ENCODE measurements at regions of chr5 and their contacts with region 1.

Region 1: GRCh38 chr5:142387033-142387682 is 62.3 kb upstream of the SPRY4 start:
- DNase-seq: no peak
- H3K4me3 ChIP-seq: no peak overlapping the region
- H3K4me3 Mint-ChIP-seq: no peak overlapping the region
- H3K27ac ChIP-seq: no peak overlapping the region
- H3K27ac Mint-ChIP-seq: peak overlapping the region in 1 of 8 donors; percentile 2
- H3K4me1 ChIP-seq: peaks cover 8% of the 10 kb centered on the region
- H3K4me1 Mint-ChIP-seq: peaks cover 3 to 5% (median 3%) of the 10 kb centered on the region in 3 donors
- H3K27me3 ChIP-seq: no peaks in the 10 kb centered on the region
- H3K27me3 Mint-ChIP-seq: peaks cover 4 to 15% of the 10 kb centered on the region in 2 donors

Region 2: GRCh38 chr5:142053426-142054151 is 333.6 kb before region 1 on chr5:
- CTCF ChIA-PET with region 1: no interaction called
- POLR2A ChIA-PET with region 1: interaction called, 11 read pairs
- DNase-seq: no peak
- H3K4me3 ChIP-seq: no peak overlapping the region
- H3K4me3 Mint-ChIP-seq: no peak overlapping the region
- H3K27ac ChIP-seq: no peak overlapping the region
- H3K27ac Mint-ChIP-seq: peak overlapping the region in 1 of 8 donors; percentile 3
- H3K4me1 ChIP-seq: no peaks in the 10 kb centered on the region
- H3K4me1 Mint-ChIP-seq: peaks cover 0 to 5% (median 3%) of the 10 kb centered on the region in 3 donors
- H3K27me3 ChIP-seq: no peaks in the 10 kb centered on the region
- H3K27me3 Mint-ChIP-seq: peaks cover 0 to 3% of the 10 kb centered on the region in 2 donors

Region 3: GRCh38 chr5:142366007-142366406 is 21.2 kb before region 1 on chr5:
- CTCF ChIA-PET with region 1: no interaction called
- POLR2A ChIA-PET with region 1: no interaction called
- DNase-seq: no peak
- H3K4me3 ChIP-seq: no peak overlapping the region
- H3K4me3 Mint-ChIP-seq: no peak overlapping the region
- H3K27ac ChIP-seq: no peak overlapping the region
- H3K27ac Mint-ChIP-seq: no peak overlapping the region
- H3K4me1 ChIP-seq: no peaks in the 10 kb centered on the region
- H3K4me1 Mint-ChIP-seq: peaks cover 3 to 5% (median 4%) of the 10 kb centered on the region in 3 donors
- H3K27me3 ChIP-seq: no peaks in the 10 kb centered on the region
- H3K27me3 Mint-ChIP-seq: peaks cover 0 to 3% of the 10 kb centered on the region in 2 donors

Region 4: GRCh38 chr5:142403571-142403971 is 16.4 kb after region 1 on chr5:
- CTCF ChIA-PET with region 1: no interaction called
- POLR2A ChIA-PET with region 1: no interaction called
- DNase-seq: no peak
- H3K4me3 ChIP-seq: no peak overlapping the region
- H3K4me3 Mint-ChIP-seq: no peak overlapping the region
- H3K27ac ChIP-seq: no peak overlapping the region
- H3K27ac Mint-ChIP-seq: no peak overlapping the region
- H3K4me1 ChIP-seq: no peaks in the 10 kb centered on the region
- H3K4me1 Mint-ChIP-seq: peaks cover 0 to 11% (median 0%) of the 10 kb centered on the region in 3 donors
- H3K27me3 ChIP-seq: no peaks in the 10 kb centered on the region
- H3K27me3 Mint-ChIP-seq: peaks cover 0 to 3% of the 10 kb centered on the region in 2 donors

Measured in CD8-positive, alpha-beta memory T cell (primary cell).